Activated CD4-positive, alpha-beta memory T cell treated with anti-CD3 and anti-CD28 coated beads, Interleukin-2, amount 10 ng/mL, durations not matched to agents 7 days and 5 days (primary cell): ENCODE measurements at regions of chr17 and their contacts with region 1.

Region 1: GRCh38 chr17:45317112-45317928 is 500 bp upstream of the MAP3K14 start:
- DNase-seq: peak; percentile 100
- H3K4me3 Mint-ChIP-seq: peak overlapping the region; percentile 82
- H3K27ac Mint-ChIP-seq: peak overlapping the region; percentile 82
- H3K4me1 Mint-ChIP-seq: peaks cover 73% of the 10 kb centered on the region
- H3K27me3 Mint-ChIP-seq: no peaks in the 10 kb centered on the region

Region 2: GRCh38 chr17:45161019-45161825 is 156.1 kb before region 1 on chr17:
- CTCF ChIA-PET with region 1: no interaction called
- POLR2A ChIA-PET with region 1: interaction called, 26 read pairs
- DNase-seq: peak; percentile 98
- H3K4me3 Mint-ChIP-seq: peak overlapping the region; percentile 98
- H3K27ac Mint-ChIP-seq: peak overlapping the region; percentile 90
- H3K4me1 Mint-ChIP-seq: peaks cover 46% of the 10 kb centered on the region
- H3K27me3 Mint-ChIP-seq: no peaks in the 10 kb centered on the region

Region 3: DNA sequence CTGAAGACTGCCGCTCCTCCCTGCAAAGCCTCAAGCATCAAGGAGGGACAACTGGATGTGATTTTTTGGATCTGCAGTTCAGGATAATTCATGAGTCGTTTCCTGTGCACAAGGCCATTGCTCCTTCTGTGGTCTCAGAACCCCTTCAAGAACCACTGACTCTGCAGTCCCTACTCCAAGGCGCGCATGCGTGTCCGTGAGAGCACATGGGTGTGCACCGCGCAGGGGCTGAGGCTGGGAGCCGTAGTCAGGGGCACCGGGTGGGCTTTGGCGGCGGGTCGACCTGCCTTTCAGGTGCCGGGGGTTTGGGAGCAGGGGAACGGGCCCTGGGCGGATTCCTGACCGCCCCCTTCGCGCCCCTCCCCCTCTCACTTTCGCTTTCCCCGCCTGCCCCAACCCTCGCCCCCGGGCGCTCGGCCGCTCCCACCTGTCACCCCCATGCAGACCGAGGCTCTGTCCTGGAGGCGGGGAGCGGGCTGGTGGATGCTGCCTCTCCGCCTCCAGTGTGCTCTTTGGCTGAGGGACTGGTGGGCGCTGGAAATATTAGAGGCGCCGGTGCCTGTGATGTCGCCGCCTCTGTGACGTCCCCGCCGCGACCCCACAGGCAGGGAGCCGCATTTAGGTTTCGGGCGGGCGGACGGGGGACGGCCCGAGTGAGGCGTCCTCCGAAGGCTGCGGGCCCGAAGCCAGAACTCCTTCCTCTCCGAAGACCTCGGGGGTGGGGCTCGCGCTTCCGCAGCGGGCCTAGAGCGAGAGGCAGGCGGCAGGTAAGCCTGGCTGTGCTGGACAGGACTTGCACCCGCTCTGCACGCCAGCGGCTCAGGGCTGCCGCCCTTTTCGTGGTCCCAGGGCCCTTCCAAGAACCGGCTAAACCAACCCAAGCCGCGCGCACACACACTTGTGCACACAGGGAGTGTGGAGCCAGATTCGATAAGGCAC is 55.5 kb before region 1 on chr17 and contains the start of gene SPATA32:
- CTCF ChIA-PET with region 1: interaction called, 4 read pairs
- POLR2A ChIA-PET with region 1: interaction called, 12 read pairs
- DNase-seq: peak; percentile 75
- H3K4me3 Mint-ChIP-seq: peak within 1 kb of the TSS; percentile 70
- H3K27ac Mint-ChIP-seq: peak within 1 kb of the TSS; percentile 61
- H3K4me1 Mint-ChIP-seq: peaks cover 22% of the 10 kb centered on the region
- H3K27me3 Mint-ChIP-seq: no peaks in the 10 kb centered on the region
- total RNA-seq, gene SPATA32: 0.20 to 0.23 TPM

Region 4: GRCh38 chr17:45293413-45294211 is 23.7 kb before region 1 on chr17:
- CTCF ChIA-PET with region 1: interaction called, 28 read pairs
- POLR2A ChIA-PET with region 1: interaction called, 45 read pairs
- DNase-seq: no peak
- H3K4me3 Mint-ChIP-seq: no peak overlapping the region
- H3K27ac Mint-ChIP-seq: peak overlapping the region; percentile 63
- H3K4me1 Mint-ChIP-seq: peaks cover 76% of the 10 kb centered on the region
- H3K27me3 Mint-ChIP-seq: no peaks in the 10 kb centered on the region

Region 5: GRCh38 chr17:45385331-45385997 is 68.1 kb after region 1 on chr17:
- CTCF ChIA-PET with region 1: interaction called, 11 read pairs
- POLR2A ChIA-PET with region 1: interaction called, 9 read pairs
- DNase-seq: peak; percentile 90
- H3K4me3 Mint-ChIP-seq: no peak overlapping the region
- H3K27ac Mint-ChIP-seq: no peak overlapping the region
- H3K4me1 Mint-ChIP-seq: peaks cover 20% of the 10 kb centered on the region
- H3K27me3 Mint-ChIP-seq: peaks cover 28% of the 10 kb centered on the region

Region 6: DNA sequence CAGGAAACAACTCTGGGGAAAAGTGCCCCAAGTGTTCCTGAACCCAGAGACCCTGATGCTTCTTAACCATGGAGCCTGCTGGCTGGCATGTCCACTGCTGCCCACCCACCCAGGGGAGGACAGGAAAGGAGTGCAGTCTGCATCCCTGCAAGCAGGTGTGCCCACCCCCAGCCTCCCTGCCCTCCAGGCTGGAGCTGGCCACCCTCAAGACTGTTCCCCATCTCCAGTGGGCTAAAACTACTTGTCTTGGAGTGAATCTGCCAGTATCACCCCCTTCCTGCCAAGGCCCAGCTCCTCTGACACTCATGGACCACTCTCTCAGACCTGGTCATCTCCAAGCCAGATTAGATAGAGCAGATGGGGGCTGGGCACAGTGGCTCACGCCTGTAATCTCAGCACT is 85.6 kb after region 1 on chr17:
- CTCF ChIA-PET with region 1: no interaction called
- POLR2A ChIA-PET with region 1: no interaction called
- DNase-seq: no peak
- H3K4me3 Mint-ChIP-seq: no peak overlapping the region
- H3K27ac Mint-ChIP-seq: no peak overlapping the region
- H3K4me1 Mint-ChIP-seq: peaks cover 18% of the 10 kb centered on the region
- H3K27me3 Mint-ChIP-seq: no peaks in the 10 kb centered on the region

Region 7: DNA sequence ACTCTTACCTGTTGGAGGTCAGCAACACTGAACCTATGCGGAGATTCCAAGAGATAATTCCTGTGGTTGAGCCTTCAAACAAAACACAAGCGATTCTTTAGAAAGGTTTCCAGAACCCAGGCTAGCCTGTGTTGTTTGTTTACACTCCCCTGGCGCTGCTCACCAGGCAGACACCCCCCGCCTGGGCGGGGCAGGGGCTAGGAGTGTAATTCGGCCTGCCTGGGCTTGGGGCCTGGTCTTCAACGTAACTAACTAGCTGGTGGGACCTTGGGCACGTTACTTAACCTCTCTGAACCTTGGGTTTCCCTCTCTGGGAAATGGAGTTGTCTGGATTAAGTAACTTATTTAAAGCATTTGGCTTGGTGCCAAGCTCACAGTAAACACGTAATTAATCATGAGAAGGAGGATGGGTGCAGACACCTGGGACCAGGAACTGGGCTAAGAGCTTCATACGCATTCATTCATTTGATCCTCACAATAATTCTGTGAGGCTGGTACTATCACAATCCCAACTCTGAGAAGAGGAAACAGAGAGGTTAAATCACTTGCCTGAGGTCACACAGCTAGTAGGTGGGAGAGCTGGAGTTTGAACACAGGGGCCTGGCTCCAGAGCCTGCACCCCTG is 122.9 kb after region 1 on chr17:
- CTCF ChIA-PET with region 1: no interaction called
- POLR2A ChIA-PET with region 1: no interaction called
- DNase-seq: no peak
- H3K4me3 Mint-ChIP-seq: no peak overlapping the region
- H3K27ac Mint-ChIP-seq: peak overlapping the region; percentile 16
- H3K4me1 Mint-ChIP-seq: peaks cover 22% of the 10 kb centered on the region
- H3K27me3 Mint-ChIP-seq: no peaks in the 10 kb centered on the region